ENCODE measurements at regions of chr7 and their contacts with region 1.

Region 1: GRCh38 chr7:119197877-119198527 is 973.5 kb downstream of the ANKRD7 start:
- H3K4me3 ChIP-seq: no peak overlapping the region
- H3K27ac ChIP-seq: no peak overlapping the region
- H3K4me1 ChIP-seq: no peaks in the 10 kb centered on the region
- CTCF ChIP-seq: peak; percentile 41; the same call in 1 of the 2 replicates

Region 2: GRCh38 chr7:118918556-118918955 is 279.4 kb before region 1 on chr7:
- CTCF ChIA-PET with region 1: interaction called, 10 read pairs
- POLR2A ChIA-PET with region 1: no interaction called
- H3K4me3 ChIP-seq: no peak overlapping the region
- H3K27ac ChIP-seq: no peak overlapping the region
- H3K4me1 ChIP-seq: no peaks in the 10 kb centered on the region
- CTCF ChIP-seq: no peak

Region 3: DNA sequence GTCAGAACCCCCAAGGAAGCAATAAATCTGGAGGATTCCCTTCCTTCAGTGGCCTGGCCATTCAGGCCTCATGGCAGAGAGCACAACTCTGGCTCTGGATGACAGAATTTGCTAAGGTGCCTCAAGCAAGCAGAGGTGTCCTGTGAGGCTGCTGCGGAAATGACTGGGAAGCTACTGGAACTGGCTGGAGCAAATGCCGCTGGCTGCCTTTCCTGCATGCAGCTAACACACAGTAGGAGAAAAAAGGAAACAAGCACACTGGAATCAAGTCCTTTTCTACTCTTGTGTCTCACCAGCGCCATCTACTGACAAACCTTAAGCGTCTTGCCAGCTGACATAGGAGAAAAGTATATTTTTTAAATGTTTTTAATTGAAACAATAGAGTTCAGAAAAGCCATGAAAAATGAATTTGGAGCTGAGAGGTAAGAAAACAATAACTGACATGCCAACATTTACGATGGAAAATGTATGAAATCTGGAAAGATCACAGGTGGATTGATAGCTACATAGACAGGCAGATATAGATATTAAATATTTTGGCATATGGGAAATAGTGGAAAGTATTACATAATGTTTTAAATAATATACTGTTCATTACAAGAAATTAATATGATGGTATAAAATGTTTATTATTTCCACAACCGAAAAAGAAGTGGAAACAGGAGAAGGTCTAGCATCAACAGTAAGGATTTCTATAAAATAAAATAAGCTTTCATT is 21.9 kb before region 1 on chr7:
- CTCF ChIA-PET with region 1: interaction called, 10 read pairs
- POLR2A ChIA-PET with region 1: no interaction called
- H3K4me3 ChIP-seq: no peak overlapping the region
- H3K27ac ChIP-seq: no peak overlapping the region
- H3K4me1 ChIP-seq: no peaks in the 10 kb centered on the region
- CTCF ChIP-seq: no peak

Region 4: GRCh38 chr7:119184124-119184788 is 13.7 kb before region 1 on chr7:
- CTCF ChIA-PET with region 1: interaction called, 10 read pairs
- POLR2A ChIA-PET with region 1: no interaction called
- H3K4me3 ChIP-seq: no peak overlapping the region
- H3K27ac ChIP-seq: no peak overlapping the region
- H3K4me1 ChIP-seq: no peaks in the 10 kb centered on the region
- CTCF ChIP-seq: no peak